ENCODE measurements at regions of chr3 and their contacts with region 1.

Region 1: DNA sequence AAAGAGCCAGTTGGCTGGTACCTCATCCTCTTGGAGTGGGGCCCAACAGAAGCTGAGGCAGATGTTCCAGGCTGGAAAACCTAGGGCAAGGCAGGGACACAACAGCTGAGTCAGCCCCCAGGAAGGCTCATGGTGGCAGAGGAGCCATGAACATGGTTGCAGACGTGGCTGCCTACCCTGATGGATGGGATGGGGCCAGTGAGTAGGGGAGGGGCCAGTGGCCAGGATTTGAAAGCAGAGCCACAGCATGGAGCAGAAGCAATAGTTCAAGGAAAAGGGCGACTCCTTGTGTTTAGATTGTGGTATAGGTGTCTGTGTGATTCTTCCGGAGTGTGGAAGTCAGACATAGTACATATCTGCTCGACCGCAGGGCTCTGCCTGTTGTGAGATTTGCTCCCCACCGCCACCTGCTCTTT is 24.2 kb downstream of the PXYLP1 start:
- DNase-seq: peak; percentile 70
- ATAC-seq: peak; percentile 93
- H3K4me3 Mint-ChIP-seq: no peak overlapping the region
- H3K27ac Mint-ChIP-seq: peak overlapping the region; percentile 47
- H3K4me1 Mint-ChIP-seq: peaks cover 49% of the 10 kb centered on the region
- H3K27me3 Mint-ChIP-seq: no peaks in the 10 kb centered on the region
- CTCF ChIP-seq: peak; percentile 49

Region 2: GRCh38 chr3:141237701-141238521 is 17.9 kb before region 1 on chr3:
- CTCF ChIA-PET with region 1: interaction called, 143 read pairs
- POLR2A ChIA-PET with region 1: interaction called, 9 read pairs
- intact Hi-C with region 1: no loop called
- DNase-seq: peak; percentile 64
- ATAC-seq: peak; percentile 86
- H3K4me3 Mint-ChIP-seq: no peak overlapping the region
- H3K27ac Mint-ChIP-seq: peak overlapping the region; percentile 43
- H3K4me1 Mint-ChIP-seq: peaks cover 90% of the 10 kb centered on the region
- H3K27me3 Mint-ChIP-seq: no peaks in the 10 kb centered on the region
- CTCF ChIP-seq: no peak

Region 3: GRCh38 chr3:141243271-141243707 is 12.6 kb before region 1 on chr3:
- CTCF ChIA-PET with region 1: interaction called, 65 read pairs
- POLR2A ChIA-PET with region 1: interaction called, 9 read pairs
- intact Hi-C with region 1: no loop called
- DNase-seq: peak; percentile 93
- ATAC-seq: peak; percentile 99
- H3K4me3 Mint-ChIP-seq: peak overlapping the region; percentile 59
- H3K27ac Mint-ChIP-seq: peak overlapping the region; percentile 86
- H3K4me1 Mint-ChIP-seq: peaks cover 50% of the 10 kb centered on the region
- H3K27me3 Mint-ChIP-seq: no peaks in the 10 kb centered on the region
- CTCF ChIP-seq: no peak